Activated CD4-positive, alpha-beta memory T cell treated with anti-CD3 and anti-CD28 coated beads for 36 hours (primary cell): ENCODE measurements at regions of chrX and their contacts with region 1.

Region 1: GRCh38 chrX:10083809-10084208 is 73.0 kb upstream of the CLCN4 start:
- DNase-seq: no peak
- H3K4me3 Mint-ChIP-seq: no peak overlapping the region
- H3K27ac Mint-ChIP-seq: no peak overlapping the region
- H3K4me1 Mint-ChIP-seq: peaks cover 48% of the 10 kb centered on the region
- H3K27me3 Mint-ChIP-seq: no peaks in the 10 kb centered on the region

Region 2: DNA sequence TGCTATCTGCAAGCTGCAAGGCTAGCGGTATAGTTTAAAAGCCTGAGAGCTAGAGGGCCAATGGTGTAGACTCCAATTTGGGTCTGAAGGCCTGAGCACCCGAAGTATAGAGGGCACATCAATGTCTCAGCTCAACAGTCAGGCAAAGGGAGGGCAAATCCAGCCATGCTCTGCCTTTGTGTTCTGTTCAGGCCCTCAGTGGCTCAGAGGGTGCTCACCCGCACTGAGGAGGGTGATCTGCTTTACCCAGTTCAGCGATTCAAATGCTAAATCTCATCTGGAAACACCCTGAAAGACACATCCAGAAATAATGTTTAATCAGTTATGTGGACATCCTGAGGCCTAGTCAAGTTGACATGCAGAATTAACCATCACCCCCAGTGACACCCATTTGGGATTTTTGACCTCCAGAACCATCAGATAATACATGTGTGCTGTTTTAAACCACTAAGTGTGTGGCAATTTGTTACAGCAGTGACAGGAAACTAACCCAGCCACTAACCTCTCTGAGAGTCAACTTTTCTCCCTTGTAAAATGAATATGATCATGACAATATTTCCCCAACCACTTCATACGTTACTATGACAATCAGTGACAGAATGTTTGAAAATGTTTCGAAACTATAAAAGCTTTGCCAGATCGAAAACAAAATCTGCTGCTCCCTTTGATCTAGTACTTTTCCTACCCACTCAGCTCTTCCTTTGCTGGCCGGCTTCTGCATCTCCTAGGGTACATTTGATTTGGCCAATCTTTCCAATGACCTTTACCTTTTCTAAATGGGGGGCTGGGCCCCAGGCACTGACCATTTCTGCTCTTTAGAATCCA is 627.3 kb before region 1 on chrX:
- CTCF ChIA-PET with region 1: no interaction called
- POLR2A ChIA-PET with region 1: no interaction called
- intact Hi-C with region 1: loop called (anchors 5 kb)
- DNase-seq: peak; percentile 44
- H3K4me3 Mint-ChIP-seq: peak overlapping the region; percentile 41
- H3K27ac Mint-ChIP-seq: peak overlapping the region; percentile 80
- H3K4me1 Mint-ChIP-seq: peaks cover 31% of the 10 kb centered on the region
- H3K27me3 Mint-ChIP-seq: no peaks in the 10 kb centered on the region

Region 3: GRCh38 chrX:10014462-10015356 is 69.1 kb before region 1 on chrX:
- CTCF ChIA-PET with region 1: no interaction called
- POLR2A ChIA-PET with region 1: no interaction called
- intact Hi-C with region 1: loop called (anchors 2 kb)
- DNase-seq: peak; percentile 75
- H3K4me3 Mint-ChIP-seq: peak overlapping the region; percentile 68
- H3K27ac Mint-ChIP-seq: no peak overlapping the region
- H3K4me1 Mint-ChIP-seq: peaks cover 42% of the 10 kb centered on the region
- H3K27me3 Mint-ChIP-seq: peaks cover 6% of the 10 kb centered on the region

Region 4: DNA sequence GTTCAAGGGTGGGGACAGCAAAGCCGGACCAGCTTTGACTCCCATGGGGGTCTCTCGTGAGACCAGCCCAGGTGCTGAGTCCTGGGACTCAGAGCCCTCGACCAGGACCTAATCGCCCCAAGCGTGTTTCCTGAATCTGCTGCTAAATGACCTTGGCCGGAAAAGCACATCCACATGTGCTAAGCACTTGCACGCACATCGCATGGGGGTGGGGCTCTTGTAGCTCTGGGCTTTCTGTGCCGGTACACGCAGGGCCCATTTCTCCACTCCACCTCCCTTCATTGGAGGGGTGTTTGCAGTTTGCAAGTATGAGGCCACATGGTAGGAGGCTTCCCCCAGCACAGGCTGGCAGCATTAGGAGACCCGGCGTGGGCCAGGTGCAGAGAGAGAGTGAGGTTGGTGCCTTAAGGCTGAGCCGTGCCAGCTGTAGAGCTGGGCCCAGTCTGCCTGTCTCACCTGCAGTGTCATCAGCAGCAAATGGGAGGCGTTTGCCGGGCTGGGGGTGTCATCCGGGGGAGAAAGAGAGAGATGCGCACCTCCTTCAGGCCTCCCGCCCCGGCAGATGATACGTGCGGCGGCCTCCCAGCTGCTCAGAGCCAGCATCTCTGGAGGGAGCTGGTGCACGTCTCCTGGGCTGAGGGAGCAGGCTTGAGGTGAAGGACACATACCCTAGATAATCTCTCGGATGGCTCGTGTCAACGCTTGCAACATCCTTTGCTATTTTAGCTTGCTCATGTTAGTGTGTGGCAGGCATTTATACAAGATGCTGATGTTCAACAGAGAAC is 27.7 kb after region 1 on chrX:
- CTCF ChIA-PET with region 1: interaction called, 3 read pairs
- POLR2A ChIA-PET with region 1: interaction called, 7 read pairs
- intact Hi-C with region 1: loop called (anchors 2 kb)
- DNase-seq: peak; percentile 63
- H3K4me3 Mint-ChIP-seq: peak overlapping the region; percentile 69
- H3K27ac Mint-ChIP-seq: peak overlapping the region; percentile 94
- H3K4me1 Mint-ChIP-seq: peaks cover 62% of the 10 kb centered on the region
- H3K27me3 Mint-ChIP-seq: no peaks in the 10 kb centered on the region

Region 5: DNA sequence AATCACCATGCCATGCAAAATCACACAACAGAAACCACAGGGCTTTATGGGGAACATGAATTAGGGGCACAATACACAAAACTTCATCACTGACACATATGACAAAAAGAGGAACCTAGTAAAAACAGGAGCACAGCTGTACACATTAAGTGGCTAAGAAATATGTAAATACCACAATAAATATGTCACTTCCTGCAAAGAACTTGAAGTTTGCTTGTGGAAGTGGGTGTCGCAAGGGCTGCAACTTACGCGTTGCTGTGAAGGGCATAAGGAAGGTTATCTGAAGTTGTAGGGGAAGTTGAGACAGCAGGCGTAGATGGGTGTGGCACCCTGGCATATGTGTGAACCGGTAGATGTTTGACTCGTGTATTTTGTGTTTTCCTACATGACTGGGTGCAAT is 115.4 kb after region 1 on chrX:
- CTCF ChIA-PET with region 1: no interaction called
- POLR2A ChIA-PET with region 1: no interaction called
- intact Hi-C with region 1: no loop called
- DNase-seq: peak; percentile 8
- H3K4me3 Mint-ChIP-seq: no peak overlapping the region
- H3K27ac Mint-ChIP-seq: no peak overlapping the region
- H3K4me1 Mint-ChIP-seq: peaks cover 2% of the 10 kb centered on the region
- H3K27me3 Mint-ChIP-seq: no peaks in the 10 kb centered on the region